CD4-positive, alpha-beta memory T cell (primary cell): ENCODE measurements at regions of chr16 and their contacts with region 1.

Region 1: GRCh38 chr16:72124761-72125634 is 31.4 kb downstream of the DHX38 start:
- DNase-seq: peak; percentile 38 to 59 (median 45)
- H3K4me3 ChIP-seq: no peak overlapping the region
- H3K4me3 Mint-ChIP-seq: no peak overlapping the region
- H3K27ac ChIP-seq: no peak overlapping the region
- H3K27ac Mint-ChIP-seq: no peak overlapping the region
- H3K4me1 ChIP-seq: no peaks in the 10 kb centered on the region
- H3K4me1 Mint-ChIP-seq: no peaks in the 10 kb centered on the region
- H3K27me3 ChIP-seq: no peaks in the 10 kb centered on the region
- H3K27me3 Mint-ChIP-seq: no peaks in the 10 kb centered on the region

Region 2: GRCh38 chr16:72317446-72317845 is 192.4 kb after region 1 on chr16:
- CTCF ChIA-PET with region 1: no interaction called
- POLR2A ChIA-PET with region 1: no interaction called
- intact Hi-C with region 1: no loop called
- DNase-seq: no peak
- H3K4me3 ChIP-seq: no peak overlapping the region
- H3K4me3 Mint-ChIP-seq: no peak overlapping the region
- H3K27ac ChIP-seq: no peak overlapping the region
- H3K27ac Mint-ChIP-seq: no peak overlapping the region
- H3K4me1 ChIP-seq: no peaks in the 10 kb centered on the region
- H3K4me1 Mint-ChIP-seq: no peaks in the 10 kb centered on the region
- H3K27me3 ChIP-seq: no peaks in the 10 kb centered on the region
- H3K27me3 Mint-ChIP-seq: peaks cover 0 to 2% of the 10 kb centered on the region in 2 donors

Region 3: DNA sequence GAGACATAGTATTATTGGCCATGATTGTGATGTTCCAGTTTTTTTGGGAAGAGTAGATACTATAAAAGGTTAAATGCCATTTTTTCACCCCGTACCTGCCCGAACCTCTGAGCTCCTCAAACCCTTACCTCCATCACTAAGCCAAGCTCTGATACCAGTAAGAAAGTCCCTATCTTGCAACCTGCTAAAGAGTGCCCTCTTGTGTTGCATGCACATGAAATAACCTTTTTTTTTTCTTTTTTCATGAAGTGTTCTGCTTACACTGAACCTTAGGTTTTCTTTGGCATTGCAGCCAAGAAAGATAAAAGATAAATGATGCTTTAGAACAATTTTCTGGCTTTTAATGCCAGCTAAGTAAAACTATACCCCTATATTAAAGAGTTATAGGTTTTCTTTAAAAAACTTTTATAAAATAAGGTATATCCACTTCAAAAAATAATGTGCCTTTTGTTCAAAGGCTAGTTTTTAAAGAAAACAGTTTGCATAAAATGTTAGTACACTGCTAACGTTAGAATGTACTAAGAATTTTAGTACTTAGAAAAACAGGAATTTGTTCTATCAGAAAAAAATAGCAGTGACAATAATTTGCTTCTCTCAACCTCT is 342.3 kb after region 1 on chr16:
- CTCF ChIA-PET with region 1: interaction called, 10 read pairs
- POLR2A ChIA-PET with region 1: no interaction called
- intact Hi-C with region 1: no loop called
- DNase-seq: peak in 1 of 5 donors; percentile 15
- H3K4me3 ChIP-seq: no peak overlapping the region
- H3K4me3 Mint-ChIP-seq: no peak overlapping the region
- H3K27ac ChIP-seq: no peak overlapping the region
- H3K27ac Mint-ChIP-seq: no peak overlapping the region
- H3K4me1 ChIP-seq: no peaks in the 10 kb centered on the region
- H3K4me1 Mint-ChIP-seq: peaks cover 0 to 6% (median under 1%) of the 10 kb centered on the region in 4 donors
- H3K27me3 ChIP-seq: no peaks in the 10 kb centered on the region
- H3K27me3 Mint-ChIP-seq: no peaks in the 10 kb centered on the region

Region 4: GRCh38 chr16:73878611-73879010 is 1753.6 kb after region 1 on chr16:
- CTCF ChIA-PET with region 1: interaction called, 6 read pairs
- POLR2A ChIA-PET with region 1: no interaction called
- intact Hi-C with region 1: loop called (anchors 5 kb)
- DNase-seq: no peak
- H3K4me3 ChIP-seq: no peak overlapping the region
- H3K4me3 Mint-ChIP-seq: no peak overlapping the region
- H3K27ac ChIP-seq: no peak overlapping the region
- H3K27ac Mint-ChIP-seq: no peak overlapping the region
- H3K4me1 ChIP-seq: no peaks in the 10 kb centered on the region
- H3K4me1 Mint-ChIP-seq: no peaks in the 10 kb centered on the region
- H3K27me3 ChIP-seq: no peaks in the 10 kb centered on the region
- H3K27me3 Mint-ChIP-seq: peaks cover 0 to 3% of the 10 kb centered on the region in 2 donors

Region 5: DNA sequence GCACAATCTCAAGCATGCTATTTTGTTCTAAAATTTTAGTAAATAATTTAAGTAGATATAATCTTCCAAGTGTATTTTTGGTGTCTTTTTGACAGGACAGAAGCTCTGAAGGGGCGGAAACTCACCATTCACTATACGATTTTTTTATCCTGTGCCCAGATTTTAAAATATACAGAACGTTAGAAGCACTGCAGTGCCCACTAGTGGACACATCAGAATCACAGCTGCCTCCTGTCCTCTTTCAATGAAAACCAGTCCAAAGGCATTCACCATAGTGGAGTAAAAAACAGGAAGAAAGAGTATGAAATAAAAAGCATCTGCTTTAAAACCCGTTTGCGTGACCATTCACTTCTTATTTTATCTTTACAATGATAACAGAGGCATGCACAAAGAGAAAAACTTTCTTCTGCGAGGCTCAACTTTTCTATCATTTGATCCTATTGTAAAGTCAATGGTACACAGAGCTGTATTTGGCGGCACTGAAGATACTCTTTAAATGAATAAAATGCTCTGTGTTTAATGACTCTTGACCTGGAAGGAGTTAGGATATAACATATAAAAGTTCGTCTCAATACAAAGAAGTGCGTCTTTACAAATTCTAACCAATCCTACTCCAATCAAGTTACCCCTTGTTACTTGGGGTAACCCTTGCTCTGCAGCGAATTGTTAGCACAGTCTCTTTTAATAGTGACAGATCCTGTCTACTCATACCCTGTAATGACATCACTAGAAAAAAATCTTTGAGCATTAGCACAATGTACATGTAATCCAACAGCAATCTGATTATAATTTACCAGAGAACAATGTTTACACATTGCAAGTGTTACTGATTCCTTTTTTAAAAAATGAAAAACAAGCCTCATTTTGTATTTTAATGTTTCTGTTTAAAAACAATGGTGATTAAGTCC is 1831.8 kb after region 1 on chr16:
- CTCF ChIA-PET with region 1: interaction called, 11 read pairs
- POLR2A ChIA-PET with region 1: no interaction called
- intact Hi-C with region 1: no loop called
- DNase-seq: peak in 4 of 5 donors; percentile 4 to 23 (median 8)
- H3K4me3 ChIP-seq: no peak overlapping the region
- H3K4me3 Mint-ChIP-seq: no peak overlapping the region
- H3K27ac ChIP-seq: no peak overlapping the region
- H3K27ac Mint-ChIP-seq: no peak overlapping the region
- H3K4me1 ChIP-seq: no peaks in the 10 kb centered on the region
- H3K4me1 Mint-ChIP-seq: no peaks in the 10 kb centered on the region
- H3K27me3 ChIP-seq: no peaks in the 10 kb centered on the region
- H3K27me3 Mint-ChIP-seq: peaks cover 1 to 3% of the 10 kb centered on the region in 2 donors